Naive thymus-derived CD4-positive, alpha-beta T cell (primary cell): ENCODE measurements at regions of chrX and their contacts with region 1.

Region 1: GRCh38 chrX:108070891-108071290 is 20.5 kb downstream of the PSMD10 start:
- DNase-seq: no peak
- ATAC-seq: no peak
- H3K4me3 ChIP-seq: no peak overlapping the region
- H3K4me3 Mint-ChIP-seq: no peak overlapping the region
- H3K27ac ChIP-seq: no peak overlapping the region
- H3K27ac Mint-ChIP-seq: peak overlapping the region in 4 of 9 donors; percentile 22 to 78 (median 36)
- H3K4me1 ChIP-seq: no peaks in the 10 kb centered on the region
- H3K4me1 Mint-ChIP-seq: peaks cover 0 to 11% (median 1%) of the 10 kb centered on the region in 7 donors
- H3K27me3 ChIP-seq: no peaks in the 10 kb centered on the region
- H3K27me3 Mint-ChIP-seq: peaks cover 0 to 7% (median 0%) of the 10 kb centered on the region in 5 donors

Region 2: DNA sequence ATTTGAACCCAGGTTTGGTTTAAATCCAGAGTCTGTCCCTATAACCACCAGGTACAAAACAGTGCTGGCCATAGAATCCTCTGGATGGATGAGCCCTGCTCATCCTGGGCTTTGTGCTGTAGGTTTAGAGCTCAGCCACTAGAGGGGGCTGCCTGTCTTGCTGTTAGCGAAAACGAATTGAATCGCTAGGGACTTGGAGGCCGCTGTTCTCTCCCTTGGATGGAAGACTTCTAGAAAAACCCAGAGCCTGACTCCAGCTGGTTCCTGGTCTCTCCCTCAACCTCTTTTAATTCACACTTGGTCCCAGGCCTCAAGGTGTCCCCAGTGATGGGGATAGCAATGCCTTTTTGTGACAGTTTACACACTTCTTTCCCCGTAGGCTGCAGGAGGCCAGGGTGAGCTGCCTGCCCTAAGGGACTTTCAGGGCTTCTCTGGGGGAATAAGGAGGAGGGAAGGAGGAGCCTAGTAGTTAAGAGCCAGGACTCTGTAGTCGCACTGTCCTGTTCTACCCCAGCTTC is 1176.4 kb before region 1 on chrX:
- CTCF ChIA-PET with region 1: no interaction called
- POLR2A ChIA-PET with region 1: no interaction called
- intact Hi-C with region 1: loop called in 1 of 2 experiments (anchors 5 kb)
- DNase-seq: peak; percentile 13 to 57 (median 42)
- ATAC-seq: peak; percentile 74
- H3K4me3 ChIP-seq: no peak overlapping the region
- H3K4me3 Mint-ChIP-seq: no peak overlapping the region
- H3K27ac ChIP-seq: no peak overlapping the region
- H3K27ac Mint-ChIP-seq: no peak overlapping the region
- H3K4me1 ChIP-seq: no peaks in the 10 kb centered on the region
- H3K4me1 Mint-ChIP-seq: no peaks in the 10 kb centered on the region
- H3K27me3 ChIP-seq: no peaks in the 10 kb centered on the region
- H3K27me3 Mint-ChIP-seq: peaks cover 0 to 3% (median 0%) of the 10 kb centered on the region in 5 donors

Region 3: GRCh38 chrX:107025545-107025944 is 1045.3 kb before region 1 on chrX:
- CTCF ChIA-PET with region 1: interaction called, 3 read pairs
- POLR2A ChIA-PET with region 1: no interaction called
- intact Hi-C with region 1: loop called in 1 of 2 experiments (anchors 1 kb)
- DNase-seq: peak in 5 of 9 donors; percentile 0 to 23 (median 3)
- ATAC-seq: no peak
- H3K4me3 ChIP-seq: no peak overlapping the region
- H3K4me3 Mint-ChIP-seq: no peak overlapping the region
- H3K27ac ChIP-seq: no peak overlapping the region
- H3K27ac Mint-ChIP-seq: no peak overlapping the region
- H3K4me1 ChIP-seq: no peaks in the 10 kb centered on the region
- H3K4me1 Mint-ChIP-seq: peaks cover 0 to 1% (median 0%) of the 10 kb centered on the region in 7 donors
- H3K27me3 ChIP-seq: no peaks in the 10 kb centered on the region
- H3K27me3 Mint-ChIP-seq: peaks cover 0 to 4% (median 0%) of the 10 kb centered on the region in 5 donors

Region 4: GRCh38 chrX:107716816-107717700 is 353.8 kb before region 1 on chrX:
- CTCF ChIA-PET with region 1: no interaction called
- POLR2A ChIA-PET with region 1: no interaction called
- intact Hi-C with region 1: loop called in 1 of 2 experiments (anchors 2 kb)
- DNase-seq: peak; percentile 77 to 96 (median 91)
- ATAC-seq: peak; percentile 68
- H3K4me3 ChIP-seq: peak overlapping the region; percentile 97
- H3K4me3 Mint-ChIP-seq: peak overlapping the region; percentile 87 to 96 (median 92)
- H3K27ac ChIP-seq: peak overlapping the region; percentile 100
- H3K27ac Mint-ChIP-seq: peak overlapping the region; percentile 94 to 100 (median 98)
- H3K4me1 ChIP-seq: peaks cover 33 to 41% of the 10 kb centered on the region in 2 donors
- H3K4me1 Mint-ChIP-seq: peaks cover 12 to 71% (median 54%) of the 10 kb centered on the region in 7 donors
- H3K27me3 ChIP-seq: no peaks in the 10 kb centered on the region
- H3K27me3 Mint-ChIP-seq: no peaks in the 10 kb centered on the region

Region 5: DNA sequence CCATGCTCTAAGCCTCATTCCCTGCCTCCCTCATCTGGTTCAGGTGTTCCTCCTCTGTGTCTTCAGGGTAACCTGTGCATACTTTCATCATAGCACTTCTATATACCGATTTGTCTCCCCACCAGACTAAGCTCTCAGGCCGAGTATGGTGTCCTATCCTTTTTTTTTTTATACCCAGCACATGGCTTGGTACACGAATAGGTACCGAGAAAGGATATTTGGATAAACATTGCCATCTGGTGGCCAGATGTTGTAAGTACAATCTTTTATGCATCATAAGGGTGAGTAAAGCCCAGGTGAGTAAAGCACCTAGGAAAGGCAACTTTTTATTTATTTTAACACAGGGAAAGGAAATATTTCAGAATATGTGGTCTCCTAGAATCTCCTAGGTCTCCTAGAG is 176.9 kb before region 1 on chrX:
- CTCF ChIA-PET with region 1: no interaction called
- POLR2A ChIA-PET with region 1: no interaction called
- intact Hi-C with region 1: loop called (anchors 1 to 10 kb)
- DNase-seq: peak in 7 of 9 donors; percentile 30 to 68 (median 61)
- ATAC-seq: peak; percentile 72
- H3K4me3 ChIP-seq: no peak overlapping the region
- H3K4me3 Mint-ChIP-seq: no peak overlapping the region
- H3K27ac ChIP-seq: no peak overlapping the region
- H3K27ac Mint-ChIP-seq: peak overlapping the region in 3 of 9 donors; percentile 20 to 90 (median 52)
- H3K4me1 ChIP-seq: no peaks in the 10 kb centered on the region
- H3K4me1 Mint-ChIP-seq: peaks cover 0 to 8% (median 0%) of the 10 kb centered on the region in 7 donors
- H3K27me3 ChIP-seq: no peaks in the 10 kb centered on the region
- H3K27me3 Mint-ChIP-seq: no peaks in the 10 kb centered on the region

Region 6: DNA sequence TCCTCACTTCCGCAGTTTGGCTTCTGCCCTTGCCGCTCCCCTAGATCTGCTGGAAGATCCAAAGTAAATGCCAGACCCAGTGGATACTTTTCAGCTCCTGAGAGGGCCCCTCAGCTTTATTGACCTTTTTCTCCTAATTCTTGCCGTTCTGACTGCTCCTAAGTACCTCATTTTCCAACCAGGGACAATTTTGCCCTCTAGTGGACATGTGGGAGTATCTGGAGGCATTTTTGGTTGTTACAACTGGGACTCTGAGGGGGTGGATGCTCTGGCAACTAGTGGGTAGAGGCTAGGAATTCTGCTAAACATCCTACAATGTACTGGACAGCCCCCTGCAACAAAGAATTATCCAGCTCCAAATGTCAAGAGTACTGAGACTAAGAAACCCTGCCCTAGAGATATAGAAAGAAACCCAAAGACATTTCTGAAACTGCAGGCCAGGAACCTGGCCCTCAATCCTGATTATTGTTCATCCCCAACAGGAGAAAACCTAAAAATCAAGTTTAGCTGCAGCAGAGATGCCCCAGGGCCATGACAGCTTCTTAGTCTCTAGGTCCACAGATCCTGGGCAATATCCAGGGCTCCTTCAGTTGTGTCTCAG is 92.1 kb before region 1 on chrX:
- CTCF ChIA-PET with region 1: interaction called, 3 read pairs
- POLR2A ChIA-PET with region 1: no interaction called
- intact Hi-C with region 1: loop called (anchors 1 to 2 kb)
- DNase-seq: peak in 2 of 9 donors; percentile 3 to 6
- ATAC-seq: no peak
- H3K4me3 ChIP-seq: no peak overlapping the region
- H3K4me3 Mint-ChIP-seq: no peak overlapping the region
- H3K27ac ChIP-seq: no peak overlapping the region
- H3K27ac Mint-ChIP-seq: no peak overlapping the region
- H3K4me1 ChIP-seq: no peaks in the 10 kb centered on the region
- H3K4me1 Mint-ChIP-seq: peaks cover 0 to 15% (median 6%) of the 10 kb centered on the region in 7 donors
- H3K27me3 ChIP-seq: no peaks in the 10 kb centered on the region
- H3K27me3 Mint-ChIP-seq: peaks cover 0 to 2% (median 0%) of the 10 kb centered on the region in 5 donors

Region 7: DNA sequence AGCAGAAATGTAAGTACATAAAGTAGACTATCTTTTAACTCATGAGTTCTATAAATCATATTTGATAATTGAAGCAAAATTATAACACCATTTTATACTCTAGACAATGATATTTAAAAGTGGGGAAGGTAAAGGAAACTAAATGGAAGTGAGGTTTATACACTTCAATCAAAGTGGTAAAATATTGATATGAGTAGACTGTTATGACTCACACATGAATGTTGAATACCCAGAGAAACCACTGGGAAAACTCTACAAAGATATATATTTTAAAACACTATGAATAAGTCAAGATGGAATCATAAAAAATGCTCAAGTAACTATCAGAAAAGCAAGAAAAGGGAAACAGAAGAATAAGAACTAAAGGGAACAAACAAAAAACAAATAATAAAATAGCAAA is 17.7 kb before region 1 on chrX:
- CTCF ChIA-PET with region 1: no interaction called
- POLR2A ChIA-PET with region 1: no interaction called
- intact Hi-C with region 1: no loop called
- DNase-seq: no peak
- ATAC-seq: no peak
- H3K4me3 ChIP-seq: no peak overlapping the region
- H3K4me3 Mint-ChIP-seq: no peak overlapping the region
- H3K27ac ChIP-seq: no peak overlapping the region
- H3K27ac Mint-ChIP-seq: peak overlapping the region in 2 of 9 donors; percentile 43 to 67
- H3K4me1 ChIP-seq: no peaks in the 10 kb centered on the region
- H3K4me1 Mint-ChIP-seq: peaks cover 0 to 25% (median 4%) of the 10 kb centered on the region in 7 donors
- H3K27me3 ChIP-seq: no peaks in the 10 kb centered on the region
- H3K27me3 Mint-ChIP-seq: peaks cover 0 to 19% (median 0%) of the 10 kb centered on the region in 5 donors

Region 8: DNA sequence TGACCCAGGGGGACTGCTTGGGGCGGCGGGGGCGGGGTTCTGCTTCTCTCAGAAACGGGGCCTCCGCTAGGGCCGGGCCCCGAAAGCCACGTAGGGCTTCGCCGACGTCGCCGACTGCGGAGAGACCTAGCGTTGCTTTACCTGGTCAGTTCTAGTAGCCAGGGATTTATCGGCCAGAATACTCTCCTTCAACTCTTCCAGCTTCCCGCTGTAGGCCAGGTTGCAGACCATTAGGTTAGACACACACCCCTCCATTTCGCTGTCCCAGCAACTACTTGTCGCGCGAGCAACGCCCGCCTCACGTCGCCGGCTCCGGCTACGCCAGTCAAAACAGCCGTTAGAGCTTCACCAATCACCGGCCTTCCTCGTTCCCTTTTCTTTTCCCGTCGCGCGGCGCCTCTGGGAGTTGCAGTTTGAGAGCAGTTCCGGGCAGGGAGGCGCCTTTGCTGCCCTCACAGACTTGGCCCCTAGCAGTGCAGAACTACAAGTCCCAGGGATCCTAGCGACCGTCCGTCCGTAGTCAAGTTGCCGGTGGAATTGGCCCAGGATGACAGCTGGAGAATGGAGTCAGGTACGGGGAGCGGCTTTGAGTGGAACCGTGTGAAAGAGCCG is 20.5 kb after region 1 on chrX and contains the starts of genes ATG4A and PSMD10:
- CTCF ChIA-PET with region 1: interaction called, 3 read pairs
- POLR2A ChIA-PET with region 1: interaction called, 4 read pairs
- intact Hi-C with region 1: loop called in 1 of 2 experiments (anchors 2 kb)
- DNase-seq: peak; percentile 65 to 91 (median 85)
- ATAC-seq: peak; percentile 97
- H3K4me3 ChIP-seq: peak within 1 kb of the TSS; percentile 85
- H3K4me3 Mint-ChIP-seq: no peak within 1 kb of the TSS
- H3K27ac ChIP-seq: peak within 1 kb of the TSS; percentile 88
- H3K27ac Mint-ChIP-seq: no peak within 1 kb of the TSS
- H3K4me1 ChIP-seq: no peaks in the 10 kb centered on the region
- H3K4me1 Mint-ChIP-seq: peaks cover 0 to 28% (median 15%) of the 10 kb centered on the region in 7 donors
- H3K27me3 ChIP-seq: no peaks in the 10 kb centered on the region
- H3K27me3 Mint-ChIP-seq: no peaks in the 10 kb centered on the region
- total RNA-seq, gene ATG4A: 6.7 to 11.4 (median 7.5) TPM
- total RNA-seq, gene PSMD10: 17.6 to 36.8 (median 22.1) TPM

Region 9: DNA sequence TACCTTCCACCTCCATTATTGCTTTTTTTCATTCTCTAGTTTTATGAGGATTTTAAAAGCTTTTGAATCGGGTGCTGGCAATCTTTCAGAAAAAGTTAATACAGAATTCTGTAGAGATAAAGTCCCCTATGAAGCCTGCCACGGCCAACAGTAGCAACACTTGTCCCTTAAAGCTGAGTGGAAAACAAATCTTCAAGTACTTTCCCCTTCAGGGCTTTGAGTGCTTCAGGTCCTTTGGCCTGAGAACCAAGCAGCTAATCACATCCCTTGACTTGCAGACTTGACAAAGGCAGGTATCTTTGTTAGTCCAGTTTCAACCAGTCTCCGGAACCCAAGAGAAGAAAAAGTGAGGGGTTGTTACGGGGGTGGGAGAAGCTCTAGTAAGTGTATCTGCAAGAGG is 165.1 kb after region 1 on chrX:
- CTCF ChIA-PET with region 1: no interaction called
- POLR2A ChIA-PET with region 1: no interaction called
- intact Hi-C with region 1: no loop called
- DNase-seq: no peak
- ATAC-seq: no peak
- H3K4me3 ChIP-seq: no peak overlapping the region
- H3K4me3 Mint-ChIP-seq: no peak overlapping the region
- H3K27ac ChIP-seq: no peak overlapping the region
- H3K27ac Mint-ChIP-seq: no peak overlapping the region
- H3K4me1 ChIP-seq: no peaks in the 10 kb centered on the region
- H3K4me1 Mint-ChIP-seq: peaks cover 0 to 6% (median 0%) of the 10 kb centered on the region in 7 donors
- H3K27me3 ChIP-seq: no peaks in the 10 kb centered on the region
- H3K27me3 Mint-ChIP-seq: peaks cover 0 to 9% (median 5%) of the 10 kb centered on the region in 5 donors